CD4-positive, alpha-beta T cell (primary cell): ENCODE measurements at regions of chr1 and their contacts with region 1.

Region 1: GRCh38 chr1:75159154-75159553 is 25.0 kb downstream of the LHX8 start:
- DNase-seq: no peak
- ATAC-seq: no peak
- H3K4me3 ChIP-seq: no peak overlapping the region
- H3K4me3 Mint-ChIP-seq: no peak overlapping the region
- H3K27ac ChIP-seq: no peak overlapping the region
- H3K27ac Mint-ChIP-seq: no peak overlapping the region
- H3K4me1 ChIP-seq: no peaks in the 10 kb centered on the region
- H3K4me1 Mint-ChIP-seq: no peaks in the 10 kb centered on the region
- H3K27me3 ChIP-seq: no peaks in the 10 kb centered on the region
- H3K27me3 Mint-ChIP-seq: no peaks in the 10 kb centered on the region
- CTCF ChIP-seq: no peak

Region 2: GRCh38 chr1:74453277-74453676 is 705.9 kb before region 1 on chr1:
- CTCF ChIA-PET with region 1: no interaction called
- POLR2A ChIA-PET with region 1: no interaction called
- intact Hi-C with region 1: loop called in 1 of 2 experiments (anchors 5 kb)
- DNase-seq: no peak
- ATAC-seq: no peak
- H3K4me3 ChIP-seq: no peak overlapping the region
- H3K4me3 Mint-ChIP-seq: no peak overlapping the region
- H3K27ac ChIP-seq: no peak overlapping the region
- H3K27ac Mint-ChIP-seq: no peak overlapping the region
- H3K4me1 ChIP-seq: no peaks in the 10 kb centered on the region
- H3K4me1 Mint-ChIP-seq: no peaks in the 10 kb centered on the region
- H3K27me3 ChIP-seq: no peaks in the 10 kb centered on the region
- H3K27me3 Mint-ChIP-seq: no peaks in the 10 kb centered on the region
- CTCF ChIP-seq: no peak